ENCODE measurements at regions of chr6 and their contacts with region 1.

Region 1: GRCh38 chr6:134132494-134133141 is 80.2 kb upstream of the SLC2A12 start:
- H3K4me3 ChIP-seq: no peak overlapping the region
- H3K27ac ChIP-seq: no peak overlapping the region
- H3K4me1 ChIP-seq: no peaks in the 10 kb centered on the region
- CTCF ChIP-seq: no peak

Region 2: GRCh38 chr6:134111062-134111677 is 21.4 kb before region 1 on chr6:
- CTCF ChIA-PET with region 1: interaction called, 10 read pairs
- POLR2A ChIA-PET with region 1: no interaction called
- H3K4me3 ChIP-seq: no peak overlapping the region
- H3K27ac ChIP-seq: no peak overlapping the region
- H3K4me1 ChIP-seq: peaks cover 7% of the 10 kb centered on the region
- CTCF ChIP-seq: peak; percentile 77

Region 3: GRCh38 chr6:134145786-134146185 is 13.2 kb after region 1 on chr6:
- CTCF ChIA-PET with region 1: no interaction called
- POLR2A ChIA-PET with region 1: no interaction called
- H3K4me3 ChIP-seq: no peak overlapping the region
- H3K27ac ChIP-seq: no peak overlapping the region
- H3K4me1 ChIP-seq: no peaks in the 10 kb centered on the region
- CTCF ChIP-seq: no peak